IMR-90 (cell line): ENCODE measurements at regions of chr11 and their contacts with region 1.

Region 1: GRCh38 chr11:57072640-57073039 is 83.9 kb downstream of the OR5AK2 start:
- DNase-seq: peak; percentile 97
- ATAC-seq: peak; percentile 92
- H3K4me3 ChIP-seq: no peak overlapping the region
- H3K27ac ChIP-seq: no peak overlapping the region
- H3K4me1 ChIP-seq: peaks cover 4% of the 10 kb centered on the region
- H3K27me3 ChIP-seq: no peaks in the 10 kb centered on the region
- CTCF ChIP-seq: no peak
- POLR2A ChIP-seq: no peak
- RAD21 ChIP-seq: no peak

Region 2: GRCh38 chr11:57213342-57214095 is 140.9 kb after region 1 on chr11:
- CTCF ChIA-PET with region 1: no interaction called
- POLR2A ChIA-PET with region 1: no interaction called
- dilution Hi-C with region 1: no loop called
- in situ Hi-C with region 1: no loop called
- intact Hi-C with region 1: loop called (anchors 5 kb)
- DNase-seq: peak; percentile 21
- ATAC-seq: no peak; the same call in 1 of the 2 replicates
- H3K4me3 ChIP-seq: no peak overlapping the region
- H3K27ac ChIP-seq: peak overlapping the region; percentile 79; the same call in 1 of the 2 replicates
- H3K4me1 ChIP-seq: peaks cover 16% of the 10 kb centered on the region
- H3K27me3 ChIP-seq: no peaks in the 10 kb centered on the region
- CTCF ChIP-seq: no peak
- POLR2A ChIP-seq: no peak
- RAD21 ChIP-seq: no peak

Region 3: GRCh38 chr11:57255618-57256017 is 183.0 kb after region 1 on chr11:
- CTCF ChIA-PET with region 1: no interaction called
- POLR2A ChIA-PET with region 1: no interaction called
- dilution Hi-C with region 1: no loop called
- in situ Hi-C with region 1: no loop called
- intact Hi-C with region 1: loop called (anchors 2 kb)
- DNase-seq: peak; percentile 76
- ATAC-seq: peak; percentile 92
- H3K4me3 ChIP-seq: no peak overlapping the region
- H3K27ac ChIP-seq: no peak overlapping the region
- H3K4me1 ChIP-seq: peaks cover 2% of the 10 kb centered on the region
- H3K27me3 ChIP-seq: no peaks in the 10 kb centered on the region
- CTCF ChIP-seq: no peak
- POLR2A ChIP-seq: no peak
- RAD21 ChIP-seq: no peak